Panc1 (cell line): ENCODE measurements at regions of chr7 and their contacts with region 1.

Region 1: DNA sequence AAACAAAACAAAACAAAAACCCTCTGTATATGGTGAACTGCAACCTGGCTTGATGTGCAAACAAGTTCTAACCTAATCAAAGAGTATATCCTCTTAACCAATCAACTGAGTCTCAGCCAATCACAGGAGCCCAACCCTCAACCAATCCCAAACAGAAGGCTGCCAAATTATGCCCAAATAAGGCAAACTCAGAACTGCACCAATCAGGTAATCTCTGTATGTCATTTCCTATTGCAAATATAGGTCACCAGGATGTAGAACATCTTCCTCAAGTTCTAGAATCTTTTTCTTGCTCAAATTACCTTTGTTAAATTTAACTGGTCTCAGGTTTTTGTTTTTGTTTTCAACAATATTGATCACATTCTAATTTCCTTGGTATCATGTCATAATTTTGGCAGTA is 5.2 kb downstream of the FAM133B start:
- DNase-seq: no peak
- ATAC-seq: no peak; the same call in 1 of the 2 replicates
- H3K4me3 ChIP-seq: no peak overlapping the region
- H3K27ac ChIP-seq: no peak overlapping the region
- H3K4me1 ChIP-seq: peaks cover 37% of the 10 kb centered on the region
- H3K27me3 ChIP-seq: no peaks in the 10 kb centered on the region
- CTCF ChIP-seq: no peak

Region 2: GRCh38 chr7:92598310-92598981 is 13.4 kb after region 1 on chr7:
- CTCF ChIA-PET with region 1: no interaction called
- POLR2A ChIA-PET with region 1: interaction called, 11 read pairs
- in situ Hi-C with region 1: no loop called
- intact Hi-C with region 1: no loop called
- DNase-seq: no peak
- ATAC-seq: no peak
- H3K4me3 ChIP-seq: no peak overlapping the region
- H3K27ac ChIP-seq: no peak overlapping the region
- H3K4me1 ChIP-seq: peaks cover 4% of the 10 kb centered on the region; the same call in 1 of the 2 replicates
- H3K27me3 ChIP-seq: no peaks in the 10 kb centered on the region
- CTCF ChIP-seq: no peak